GM18951 (cell line): ENCODE measurements at regions of chr10 and their contacts with region 1.

Region 1: GRCh38 chr10:77179015-77179695 is 458.5 kb downstream of the KCNMA1 start:
- POLR2A ChIP-seq: no peak

Region 2: GRCh38 chr10:76411729-76412435 is 767.3 kb before region 1 on chr10:
- in situ Hi-C with region 1: no loop called
- POLR2A ChIP-seq: no peak

Region 3: GRCh38 chr10:77041636-77042258 is 137.4 kb before region 1 on chr10:
- in situ Hi-C with region 1: no loop called
- POLR2A ChIP-seq: no peak

Region 4: DNA sequence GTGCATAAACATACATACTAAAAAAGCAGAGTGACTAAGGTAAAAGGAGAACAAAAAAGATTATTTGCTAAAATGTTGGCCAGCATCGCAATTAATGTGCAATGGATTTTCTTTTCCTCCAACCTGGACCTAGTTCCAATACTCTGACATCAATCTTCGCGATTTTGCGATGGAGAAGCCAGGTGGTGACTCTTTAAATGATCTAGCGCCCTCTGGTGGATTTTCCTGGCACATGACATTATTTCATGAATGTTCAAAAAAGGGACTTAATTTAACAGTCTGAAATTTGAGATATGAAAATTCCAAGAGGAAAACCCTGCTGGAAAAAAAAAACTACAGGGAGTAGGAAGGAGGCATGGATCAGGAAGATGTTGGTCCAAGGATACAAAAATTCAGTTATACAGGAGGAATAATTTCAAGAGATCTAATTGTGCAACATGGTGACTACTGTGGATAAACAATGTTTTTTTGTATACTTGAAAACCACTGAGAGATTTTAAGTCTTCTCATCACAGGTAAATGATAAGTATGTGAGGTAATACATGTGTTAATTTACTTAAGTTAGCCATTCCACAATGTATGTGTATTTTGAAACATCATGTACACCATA is 462.7 kb after region 1 on chr10:
- in situ Hi-C with region 1: loop called (anchors 5 kb)
- POLR2A ChIP-seq: no peak